CD4-positive, alpha-beta memory T cell (primary cell): ENCODE measurements at regions of chr19 and their contacts with region 1.

Region 1: GRCh38 chr19:29873024-29873800 is 61.4 kb downstream of the CCNE1 start:
- DNase-seq: peak in 4 of 5 donors; percentile 61 to 65 (median 61)
- H3K4me3 ChIP-seq: peak overlapping the region in 1 of 2 donors; percentile 47
- H3K4me3 Mint-ChIP-seq: peak overlapping the region; percentile 61 to 79 (median 74)
- H3K27ac ChIP-seq: no peak overlapping the region
- H3K27ac Mint-ChIP-seq: no peak overlapping the region
- H3K4me1 ChIP-seq: peaks cover 10% of the 10 kb centered on the region
- H3K4me1 Mint-ChIP-seq: peaks cover 0 to 24% (median 6%) of the 10 kb centered on the region in 4 donors
- H3K27me3 ChIP-seq: peaks cover 8% of the 10 kb centered on the region
- H3K27me3 Mint-ChIP-seq: peaks cover 3 to 22% of the 10 kb centered on the region in 2 donors

Region 2: DNA sequence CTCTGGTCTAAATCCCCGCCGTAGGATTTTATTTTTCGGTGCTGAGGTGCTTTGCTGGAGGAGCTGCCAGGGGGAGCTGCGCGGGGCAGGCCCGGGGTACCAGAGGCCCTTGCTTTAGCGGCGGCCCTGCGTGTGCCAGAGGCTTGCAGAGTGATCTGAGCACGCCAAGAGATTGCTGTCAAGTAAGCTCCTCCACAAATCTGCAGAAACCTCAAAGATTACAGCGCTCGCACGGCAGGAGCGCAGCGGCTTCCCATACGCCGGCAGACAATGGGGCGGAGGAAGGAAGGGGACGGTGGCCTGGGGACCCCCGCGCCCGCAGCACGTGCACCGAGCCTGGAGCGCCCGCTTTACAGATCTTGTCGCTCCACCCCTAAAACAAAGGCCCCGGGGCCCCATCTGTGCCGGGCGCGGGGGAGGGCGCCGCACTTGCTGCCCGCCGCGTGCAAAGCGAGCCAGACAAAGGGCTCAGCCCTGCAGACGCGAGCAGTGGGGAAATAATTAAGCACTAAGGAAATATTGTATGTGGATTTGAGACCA is 149.0 kb before region 1 on chr19:
- CTCF ChIA-PET with region 1: interaction called, 145 read pairs
- POLR2A ChIA-PET with region 1: no interaction called
- intact Hi-C with region 1: no loop called
- DNase-seq: peak in 3 of 5 donors; percentile 10 to 19 (median 15)
- H3K4me3 ChIP-seq: no peak overlapping the region
- H3K4me3 Mint-ChIP-seq: peak overlapping the region; percentile 29 to 77 (median 65)
- H3K27ac ChIP-seq: no peak overlapping the region
- H3K27ac Mint-ChIP-seq: peak overlapping the region in 1 of 7 donors; percentile 50
- H3K4me1 ChIP-seq: peaks cover 11% of the 10 kb centered on the region
- H3K4me1 Mint-ChIP-seq: peaks cover 4 to 11% (median 5%) of the 10 kb centered on the region in 4 donors
- H3K27me3 ChIP-seq: peaks cover 4% of the 10 kb centered on the region
- H3K27me3 Mint-ChIP-seq: peaks cover 11 to 29% of the 10 kb centered on the region in 2 donors

Region 3: DNA sequence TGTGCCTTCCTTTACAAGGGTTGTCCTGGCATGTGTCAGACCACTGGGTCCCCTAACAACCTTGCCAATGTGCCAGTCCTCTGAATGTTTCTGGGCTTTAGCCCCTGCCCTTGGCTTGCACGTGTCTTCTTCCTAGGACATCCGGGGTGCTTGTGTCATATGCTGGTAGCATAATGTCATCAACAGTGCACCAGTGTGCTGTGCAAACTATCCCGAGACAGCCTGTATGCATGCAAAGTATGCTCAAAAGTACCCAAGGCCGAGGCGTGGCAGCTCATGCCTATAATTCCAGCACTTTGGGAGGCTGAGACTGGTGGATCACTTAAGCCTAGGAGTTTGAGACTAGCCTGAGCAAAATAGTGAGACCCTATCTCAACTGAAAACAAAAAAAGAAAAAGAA is 137.4 kb before region 1 on chr19:
- CTCF ChIA-PET with region 1: interaction called, 145 read pairs
- POLR2A ChIA-PET with region 1: interaction called, 10 read pairs
- intact Hi-C with region 1: loop called (anchors 1 kb)
- DNase-seq: no peak
- H3K4me3 ChIP-seq: no peak overlapping the region
- H3K4me3 Mint-ChIP-seq: no peak overlapping the region
- H3K27ac ChIP-seq: no peak overlapping the region
- H3K27ac Mint-ChIP-seq: no peak overlapping the region
- H3K4me1 ChIP-seq: no peaks in the 10 kb centered on the region
- H3K4me1 Mint-ChIP-seq: no peaks in the 10 kb centered on the region
- H3K27me3 ChIP-seq: no peaks in the 10 kb centered on the region
- H3K27me3 Mint-ChIP-seq: peaks cover 3 to 12% of the 10 kb centered on the region in 2 donors

Region 4: GRCh38 chr19:29761575-29762232 is 111.5 kb before region 1 on chr19:
- CTCF ChIA-PET with region 1: interaction called, 132 read pairs
- POLR2A ChIA-PET with region 1: no interaction called
- intact Hi-C with region 1: loop called (anchors 1 kb)
- DNase-seq: no peak
- H3K4me3 ChIP-seq: no peak overlapping the region
- H3K4me3 Mint-ChIP-seq: no peak overlapping the region
- H3K27ac ChIP-seq: no peak overlapping the region
- H3K27ac Mint-ChIP-seq: no peak overlapping the region
- H3K4me1 ChIP-seq: peaks cover 8% of the 10 kb centered on the region
- H3K4me1 Mint-ChIP-seq: no peaks in the 10 kb centered on the region
- H3K27me3 ChIP-seq: no peaks in the 10 kb centered on the region
- H3K27me3 Mint-ChIP-seq: peaks cover 0 to 3% of the 10 kb centered on the region in 2 donors

Region 5: DNA sequence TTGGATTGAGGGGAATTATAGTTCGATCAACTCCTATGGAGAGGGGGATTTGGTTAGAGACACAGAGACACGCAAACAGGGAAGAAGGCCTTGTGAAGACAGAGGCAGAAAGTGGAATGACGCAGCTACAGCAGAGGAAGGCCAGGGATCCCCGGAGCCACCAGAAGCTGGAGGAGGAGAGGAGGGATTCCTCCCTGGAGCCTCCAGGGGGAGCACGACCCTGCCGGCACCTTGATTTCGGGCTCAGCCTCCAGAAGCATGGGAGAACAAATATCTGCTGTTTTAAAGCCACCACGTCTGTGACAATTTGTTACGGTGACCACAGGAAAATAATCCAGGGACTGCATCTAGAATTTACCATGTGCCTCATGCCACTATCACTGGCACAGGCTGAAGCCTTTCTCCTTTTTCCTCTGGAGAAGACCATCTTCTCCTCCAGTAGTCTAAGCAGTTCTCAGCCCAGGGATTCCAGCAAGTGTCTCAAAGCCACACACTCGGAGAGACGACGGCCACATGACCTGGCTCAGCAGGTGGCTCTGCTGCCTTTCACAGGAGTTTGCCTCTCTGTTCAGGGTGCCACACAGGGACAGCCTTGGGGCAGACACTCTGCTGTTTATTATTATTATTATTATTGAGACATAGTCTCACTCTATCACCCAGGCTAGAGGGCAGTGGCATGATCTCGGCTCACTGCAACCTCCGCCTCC is 101.4 kb before region 1 on chr19:
- CTCF ChIA-PET with region 1: interaction called, 42 read pairs
- POLR2A ChIA-PET with region 1: interaction called, 3 read pairs
- intact Hi-C with region 1: loop called (anchors 1 kb)
- DNase-seq: peak in 3 of 5 donors; percentile 10 to 20 (median 13)
- H3K4me3 ChIP-seq: no peak overlapping the region
- H3K4me3 Mint-ChIP-seq: no peak overlapping the region
- H3K27ac ChIP-seq: no peak overlapping the region
- H3K27ac Mint-ChIP-seq: no peak overlapping the region
- H3K4me1 ChIP-seq: no peaks in the 10 kb centered on the region
- H3K4me1 Mint-ChIP-seq: no peaks in the 10 kb centered on the region
- H3K27me3 ChIP-seq: no peaks in the 10 kb centered on the region
- H3K27me3 Mint-ChIP-seq: no peaks in the 10 kb centered on the region

Region 6: GRCh38 chr19:29785955-29786589 is 87.1 kb before region 1 on chr19:
- CTCF ChIA-PET with region 1: interaction called, 11 read pairs
- POLR2A ChIA-PET with region 1: interaction called, 3 read pairs
- intact Hi-C with region 1: no loop called
- DNase-seq: no peak
- H3K4me3 ChIP-seq: no peak overlapping the region
- H3K4me3 Mint-ChIP-seq: no peak overlapping the region
- H3K27ac ChIP-seq: no peak overlapping the region
- H3K27ac Mint-ChIP-seq: peak overlapping the region in 1 of 7 donors; percentile 86
- H3K4me1 ChIP-seq: no peaks in the 10 kb centered on the region
- H3K4me1 Mint-ChIP-seq: no peaks in the 10 kb centered on the region
- H3K27me3 ChIP-seq: no peaks in the 10 kb centered on the region
- H3K27me3 Mint-ChIP-seq: peaks cover 1 to 3% of the 10 kb centered on the region in 2 donors